ENCODE measurements at regions of chr13 and their contacts with region 1.

Region 1: GRCh38 chr13:102845630-102846260 is at the start of gene ERCC5:
- DNase-seq: peak; percentile 96
- ATAC-seq: peak; percentile 96
- total RNA-seq, gene ERCC5: 25.7 TPM

Region 2: DNA sequence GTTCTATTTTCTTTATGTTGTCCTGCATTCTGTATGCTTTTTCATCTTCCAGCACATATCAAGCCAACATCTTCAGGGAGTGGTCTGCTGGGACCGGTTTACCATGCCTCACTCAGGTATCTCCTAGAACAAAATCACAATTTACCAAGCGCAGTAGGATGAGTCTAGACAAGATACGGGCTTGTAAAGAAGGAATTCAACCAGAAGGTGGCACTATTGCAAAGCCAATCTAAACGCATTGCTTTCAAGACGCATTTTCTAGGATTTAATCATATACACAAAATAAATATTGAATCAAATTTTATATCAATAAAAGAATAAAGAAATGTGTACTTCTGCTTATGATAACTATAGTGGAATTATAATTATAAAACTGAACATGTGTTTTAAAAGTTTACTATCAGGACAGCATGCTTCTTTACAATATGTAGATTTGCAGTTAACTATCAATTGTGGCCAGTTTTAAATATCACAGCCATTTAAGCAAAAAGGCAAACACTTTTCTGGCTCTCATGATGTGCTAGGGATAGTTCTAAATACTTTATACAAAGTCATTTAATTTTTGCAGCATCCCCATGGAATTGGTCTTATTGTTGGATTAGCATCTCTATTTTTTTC is 265.1 kb before region 1 on chr13:
- intact Hi-C with region 1: loop called (anchors 5 kb)
- DNase-seq: no peak
- ATAC-seq: peak; percentile 78

Region 3: GRCh38 chr13:102680842-102681740 is 164.7 kb before region 1 on chr13:
- intact Hi-C with region 1: no loop called
- DNase-seq: no peak
- ATAC-seq: no peak

Region 4: GRCh38 chr13:102773441-102774215 is 72.1 kb before region 1 on chr13 and contains the start of gene TEX30:
- intact Hi-C with region 1: loop called (anchors 10 kb)
- DNase-seq: peak; percentile 91
- ATAC-seq: peak; percentile 100
- total RNA-seq, gene TEX30: 7.8 TPM

Measured in Right ventricle myocardium superior (tissue), 1 donor.